ENCODE measurements at regions of chr6 and their contacts with region 1.

Region 1: DNA sequence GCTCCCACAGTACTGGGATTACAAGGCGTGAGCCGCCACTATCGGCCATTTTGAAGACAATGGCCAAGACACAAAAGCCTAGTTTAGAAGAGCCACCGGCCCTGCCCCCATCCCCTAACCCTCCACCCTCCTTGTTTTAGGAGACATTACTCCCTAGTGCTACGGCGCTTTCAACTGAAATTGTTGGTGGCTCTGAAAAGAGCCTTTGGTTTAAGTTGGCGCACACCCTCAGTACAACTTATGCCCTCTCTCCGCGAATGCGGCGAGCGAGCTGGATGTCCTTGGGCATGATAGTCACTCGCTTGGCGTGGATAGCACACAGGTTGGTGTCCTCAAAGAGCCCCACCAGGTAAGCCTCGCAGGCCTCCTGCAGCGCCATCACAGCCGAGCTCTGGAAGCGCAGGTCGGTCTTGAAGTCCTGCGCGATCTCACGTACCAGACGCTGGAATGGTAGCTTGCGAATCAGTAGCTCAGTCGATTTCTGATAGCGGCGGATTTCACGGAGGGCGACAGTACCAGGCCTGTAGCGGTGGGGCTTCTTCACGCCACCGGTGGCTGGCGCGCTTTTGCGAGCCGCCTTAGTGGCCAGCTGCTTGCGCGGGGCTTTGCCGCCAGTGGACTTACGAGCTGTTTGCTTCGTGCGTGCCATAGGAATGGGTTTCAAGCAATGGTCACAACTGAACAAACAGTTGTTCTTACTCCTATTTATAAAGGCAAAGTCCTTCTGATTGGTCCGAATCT is 114.9 kb upstream of the BTN3A2 start:
- DNase-seq: peak; percentile 79
- ATAC-seq: peak; percentile 53
- H3K4me3 Mint-ChIP-seq: peak overlapping the region; percentile 90
- H3K27ac Mint-ChIP-seq: peak overlapping the region; percentile 99
- H3K4me1 Mint-ChIP-seq: peaks cover 16% of the 10 kb centered on the region
- H3K27me3 Mint-ChIP-seq: no peaks in the 10 kb centered on the region

Region 2: GRCh38 chr6:26103770-26104456 is 146.2 kb before region 1 on chr6:
- POLR2A ChIA-PET with region 1: interaction called, 27 read pairs
- DNase-seq: peak; percentile 86
- ATAC-seq: peak; percentile 89
- H3K4me3 Mint-ChIP-seq: peak overlapping the region; percentile 93
- H3K27ac Mint-ChIP-seq: peak overlapping the region; percentile 100
- H3K4me1 Mint-ChIP-seq: peaks cover 18% of the 10 kb centered on the region
- H3K27me3 Mint-ChIP-seq: no peaks in the 10 kb centered on the region

Region 3: DNA sequence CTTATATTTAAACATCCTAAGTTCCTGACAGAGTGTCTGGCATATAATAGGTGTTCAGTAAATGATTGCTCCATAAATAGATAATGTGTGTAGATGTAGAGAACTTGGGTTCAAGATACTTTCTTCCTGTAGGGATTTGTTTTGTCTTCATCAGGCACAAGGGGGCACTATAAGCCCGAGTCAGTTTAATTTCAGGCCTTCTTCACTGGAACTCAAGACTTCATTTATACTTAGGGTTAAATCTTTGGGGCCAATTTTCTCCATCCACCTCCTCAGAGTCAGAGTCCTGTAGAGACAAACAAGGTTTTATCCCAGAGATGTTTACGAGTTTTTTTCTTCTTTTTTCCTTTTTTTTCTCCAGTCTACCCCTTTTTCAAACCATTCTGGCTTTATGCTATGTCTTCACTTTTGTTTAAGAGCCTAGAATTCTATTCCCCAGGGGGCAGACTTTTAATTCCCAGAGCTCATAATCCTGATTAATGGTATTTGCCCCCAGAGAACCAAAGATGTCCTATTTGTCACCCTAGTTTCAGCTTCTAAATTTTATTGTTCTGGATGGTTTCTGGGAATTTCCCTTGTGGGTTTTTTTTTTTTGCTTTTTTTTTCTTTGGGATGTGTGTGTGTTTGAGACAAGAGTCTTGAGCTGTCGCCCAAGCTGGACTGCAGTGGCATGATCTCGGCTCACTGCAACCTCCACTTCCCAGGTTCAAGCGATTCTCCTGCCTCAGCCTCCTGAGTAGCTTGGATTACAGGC is 74.5 kb before region 1 on chr6:
- POLR2A ChIA-PET with region 1: interaction called, 27 read pairs
- DNase-seq: no peak
- ATAC-seq: no peak
- H3K4me3 Mint-ChIP-seq: peak overlapping the region; percentile 54
- H3K27ac Mint-ChIP-seq: peak overlapping the region; percentile 76
- H3K4me1 Mint-ChIP-seq: peaks cover 41% of the 10 kb centered on the region
- H3K27me3 Mint-ChIP-seq: no peaks in the 10 kb centered on the region

Region 4: DNA sequence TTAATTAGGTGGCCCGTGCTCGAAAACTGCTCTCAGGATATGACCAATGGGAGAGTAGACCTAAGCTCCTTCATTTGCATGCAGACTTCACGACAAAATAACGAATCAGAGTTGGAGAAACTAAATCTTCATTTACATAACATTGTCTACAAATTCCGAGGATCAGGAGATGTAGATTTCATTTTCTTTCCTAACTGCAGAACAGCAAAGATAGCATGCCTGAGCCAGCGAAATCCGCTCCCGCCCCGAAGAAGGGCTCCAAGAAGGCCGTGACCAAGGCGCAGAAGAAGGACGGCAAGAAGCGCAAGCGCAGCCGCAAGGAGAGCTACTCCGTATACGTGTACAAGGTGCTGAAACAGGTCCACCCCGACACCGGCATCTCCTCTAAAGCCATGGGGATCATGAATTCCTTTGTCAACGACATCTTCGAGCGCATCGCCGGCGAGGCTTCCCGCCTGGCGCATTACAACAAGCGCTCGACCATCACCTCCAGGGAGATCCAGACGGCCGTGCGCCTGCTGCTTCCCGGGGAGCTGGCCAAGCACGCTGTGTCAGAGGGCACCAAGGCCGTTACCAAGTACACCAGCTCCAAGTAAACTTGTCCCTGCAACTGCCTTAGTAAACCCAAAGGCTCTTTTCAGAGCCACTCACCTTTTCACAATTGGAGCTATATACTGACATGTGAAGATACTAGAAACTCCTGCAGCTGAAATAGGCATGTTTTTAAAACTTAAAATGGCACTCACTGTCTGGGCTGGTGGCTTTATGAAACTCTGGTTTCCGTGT is 66.4 kb before region 1 on chr6:
- POLR2A ChIA-PET with region 1: interaction called, 60 read pairs
- DNase-seq: peak; percentile 78
- ATAC-seq: peak; percentile 85
- H3K4me3 Mint-ChIP-seq: peak overlapping the region; percentile 96
- H3K27ac Mint-ChIP-seq: peak overlapping the region; percentile 99
- H3K4me1 Mint-ChIP-seq: peaks cover 48% of the 10 kb centered on the region
- H3K27me3 Mint-ChIP-seq: no peaks in the 10 kb centered on the region

Region 5: GRCh38 chr6:27871924-27872638 is 1622.0 kb after region 1 on chr6:
- POLR2A ChIA-PET with region 1: interaction called, 13 read pairs
- DNase-seq: peak; percentile 80
- ATAC-seq: peak; percentile 63
- H3K4me3 Mint-ChIP-seq: peak overlapping the region; percentile 92
- H3K27ac Mint-ChIP-seq: peak overlapping the region; percentile 93
- H3K4me1 Mint-ChIP-seq: peaks cover 44% of the 10 kb centered on the region
- H3K27me3 Mint-ChIP-seq: no peaks in the 10 kb centered on the region

Measured in activated naive CD8-positive, alpha-beta T cell treated with anti-CD3 and anti-CD28 coated beads, Interleukin-2, amount 10 ng/mL, durations not matched to agents 7 days and 5 days (primary cell).